CD8-positive, alpha-beta T cell (primary cell): ENCODE measurements at regions of chr17 and their contacts with region 1.

Region 1: DNA sequence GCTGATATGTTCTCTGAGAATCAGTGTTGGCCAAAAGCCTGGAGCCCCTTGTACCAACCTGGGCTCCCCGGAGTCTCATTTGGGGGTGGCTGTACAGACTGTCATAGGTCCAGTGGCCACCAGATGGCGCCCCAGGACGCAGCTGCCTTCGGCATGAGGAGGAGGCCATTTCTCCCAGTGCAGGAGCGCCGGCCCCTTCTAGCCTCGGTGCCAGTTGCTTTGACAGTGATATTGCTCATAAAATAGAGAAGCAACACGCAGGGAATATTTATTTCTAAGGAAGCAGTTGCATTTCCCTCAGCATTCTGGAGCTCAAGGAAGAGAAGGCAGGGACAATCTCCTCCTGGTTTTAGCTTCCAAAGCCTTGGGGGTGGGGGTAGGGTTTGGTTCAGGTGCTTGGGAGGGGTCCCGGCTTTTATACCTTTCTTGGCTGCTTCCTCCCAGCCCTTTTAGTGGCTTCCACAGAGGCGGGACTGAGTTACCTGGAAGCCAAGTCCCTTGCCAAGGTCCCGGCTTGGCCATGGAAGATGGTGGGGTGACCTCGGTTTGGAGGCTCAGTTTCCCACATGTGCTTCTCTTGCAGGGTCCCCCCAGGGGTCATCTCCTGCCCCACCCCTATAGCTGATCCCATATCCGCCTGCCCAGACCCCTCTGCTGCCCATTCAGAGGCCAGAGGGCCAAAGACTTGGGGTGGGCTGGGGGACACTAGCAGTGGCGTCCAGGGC is 117.8 kb upstream of the CDC42EP4 start:
- DNase-seq: peak; percentile 76 to 95 (median 85)
- ATAC-seq: peak; percentile 92
- H3K4me3 ChIP-seq: no peak overlapping the region
- H3K4me3 Mint-ChIP-seq: no peak overlapping the region
- H3K27ac ChIP-seq: no peak overlapping the region
- H3K27ac Mint-ChIP-seq: no peak overlapping the region
- H3K4me1 ChIP-seq: peaks cover 3% of the 10 kb centered on the region
- H3K4me1 Mint-ChIP-seq: peaks cover 7% of the 10 kb centered on the region
- H3K27me3 ChIP-seq: no peaks in the 10 kb centered on the region
- H3K27me3 Mint-ChIP-seq: no peaks in the 10 kb centered on the region
- CTCF ChIP-seq: peak; percentile 96

Region 2: DNA sequence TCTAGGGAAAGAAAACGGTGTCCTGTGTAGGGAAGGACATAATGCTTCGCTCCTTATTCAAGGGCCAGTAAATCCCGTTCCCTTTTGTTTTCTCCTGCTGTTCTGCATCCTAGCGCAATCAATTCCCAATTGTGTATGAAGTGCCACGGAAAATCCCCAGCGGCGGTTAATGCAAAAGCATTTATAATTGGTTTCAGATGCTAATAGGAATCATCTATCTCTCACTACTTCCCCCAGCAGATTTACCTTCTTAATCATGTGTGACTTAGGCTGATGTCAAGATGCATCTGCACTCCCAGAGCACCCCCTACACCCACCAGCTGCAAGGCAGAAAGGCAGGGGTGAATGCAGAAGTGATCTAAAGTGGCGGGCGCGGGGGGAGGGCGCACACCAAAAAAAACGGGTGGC is 297.5 kb before region 1 on chr17:
- CTCF ChIA-PET with region 1: no interaction called
- POLR2A ChIA-PET with region 1: no interaction called
- intact Hi-C with region 1: no loop called
- DNase-seq: no peak
- ATAC-seq: no peak
- H3K4me3 ChIP-seq: no peak overlapping the region
- H3K4me3 Mint-ChIP-seq: no peak overlapping the region
- H3K27ac ChIP-seq: no peak overlapping the region
- H3K27ac Mint-ChIP-seq: no peak overlapping the region
- H3K4me1 ChIP-seq: no peaks in the 10 kb centered on the region
- H3K4me1 Mint-ChIP-seq: no peaks in the 10 kb centered on the region
- H3K27me3 ChIP-seq: no peaks in the 10 kb centered on the region
- H3K27me3 Mint-ChIP-seq: no peaks in the 10 kb centered on the region
- CTCF ChIP-seq: no peak

Region 3: DNA sequence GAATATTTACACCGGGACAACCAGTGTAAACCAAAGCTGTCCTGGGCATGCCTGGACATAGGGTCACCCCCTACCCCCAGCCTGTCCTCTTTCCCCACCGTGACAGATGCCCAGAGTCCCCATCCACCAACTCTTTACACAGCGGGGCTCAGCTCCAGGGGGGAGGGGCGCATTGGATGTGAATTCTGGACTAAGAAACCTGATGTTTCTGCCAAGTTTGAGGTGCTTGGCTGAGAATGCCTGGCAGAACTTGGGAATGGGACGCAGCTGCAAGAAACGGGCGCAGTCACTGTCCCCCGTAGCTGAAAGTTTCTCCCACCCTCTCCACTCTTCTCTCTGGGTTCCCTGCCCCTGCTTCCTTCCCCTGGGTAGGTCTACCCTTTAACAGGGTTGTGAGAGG is 49.8 kb before region 1 on chr17:
- CTCF ChIA-PET with region 1: no interaction called
- POLR2A ChIA-PET with region 1: no interaction called
- intact Hi-C with region 1: no loop called
- DNase-seq: no peak
- ATAC-seq: no peak
- H3K4me3 ChIP-seq: no peak overlapping the region
- H3K4me3 Mint-ChIP-seq: no peak overlapping the region
- H3K27ac ChIP-seq: no peak overlapping the region
- H3K27ac Mint-ChIP-seq: no peak overlapping the region
- H3K4me1 ChIP-seq: no peaks in the 10 kb centered on the region
- H3K4me1 Mint-ChIP-seq: no peaks in the 10 kb centered on the region
- H3K27me3 ChIP-seq: no peaks in the 10 kb centered on the region
- H3K27me3 Mint-ChIP-seq: no peaks in the 10 kb centered on the region
- CTCF ChIP-seq: no peak

Region 4: DNA sequence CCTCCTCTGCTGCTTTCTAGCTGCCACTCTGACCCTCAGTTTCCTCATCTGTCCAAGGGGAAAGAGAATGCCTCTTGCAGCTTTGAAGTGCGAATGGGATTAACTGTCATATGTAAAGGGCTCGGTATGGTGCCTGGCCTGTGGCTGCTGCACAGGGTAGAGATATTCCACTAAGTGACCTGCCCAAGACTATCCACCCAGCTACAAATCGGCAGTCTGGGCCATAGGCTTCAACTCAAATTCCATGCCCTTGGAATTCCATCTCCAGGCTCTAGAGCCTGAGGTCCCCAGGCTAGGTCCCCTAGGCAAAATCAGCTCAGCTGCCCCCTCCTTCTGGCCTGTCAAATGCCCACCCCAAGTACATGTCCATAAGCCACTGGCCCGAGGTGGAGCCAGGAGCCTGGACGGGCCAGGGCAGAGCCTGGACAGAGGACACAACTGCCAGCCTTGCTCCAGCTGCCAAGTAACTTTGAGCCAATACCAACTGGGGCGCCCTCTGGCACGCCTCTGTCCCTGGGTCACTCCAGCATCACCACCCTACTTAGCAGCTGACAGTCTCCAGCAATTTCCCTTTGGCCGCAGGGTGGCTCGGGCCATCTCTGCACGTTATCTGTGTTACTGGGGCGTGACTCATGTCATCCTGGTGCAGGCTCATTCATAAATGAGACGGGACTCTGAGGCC is 157.5 kb after region 1 on chr17:
- CTCF ChIA-PET with region 1: interaction called, 10 read pairs
- POLR2A ChIA-PET with region 1: no interaction called
- intact Hi-C with region 1: loop called in 1 of 2 experiments (anchors 2 kb)
- DNase-seq: no peak
- ATAC-seq: no peak
- H3K4me3 ChIP-seq: no peak overlapping the region
- H3K4me3 Mint-ChIP-seq: no peak overlapping the region
- H3K27ac ChIP-seq: no peak overlapping the region
- H3K27ac Mint-ChIP-seq: no peak overlapping the region
- H3K4me1 ChIP-seq: peaks cover 44% of the 10 kb centered on the region
- H3K4me1 Mint-ChIP-seq: peaks cover 60% of the 10 kb centered on the region
- H3K27me3 ChIP-seq: no peaks in the 10 kb centered on the region
- H3K27me3 Mint-ChIP-seq: no peaks in the 10 kb centered on the region
- CTCF ChIP-seq: no peak

Region 5: DNA sequence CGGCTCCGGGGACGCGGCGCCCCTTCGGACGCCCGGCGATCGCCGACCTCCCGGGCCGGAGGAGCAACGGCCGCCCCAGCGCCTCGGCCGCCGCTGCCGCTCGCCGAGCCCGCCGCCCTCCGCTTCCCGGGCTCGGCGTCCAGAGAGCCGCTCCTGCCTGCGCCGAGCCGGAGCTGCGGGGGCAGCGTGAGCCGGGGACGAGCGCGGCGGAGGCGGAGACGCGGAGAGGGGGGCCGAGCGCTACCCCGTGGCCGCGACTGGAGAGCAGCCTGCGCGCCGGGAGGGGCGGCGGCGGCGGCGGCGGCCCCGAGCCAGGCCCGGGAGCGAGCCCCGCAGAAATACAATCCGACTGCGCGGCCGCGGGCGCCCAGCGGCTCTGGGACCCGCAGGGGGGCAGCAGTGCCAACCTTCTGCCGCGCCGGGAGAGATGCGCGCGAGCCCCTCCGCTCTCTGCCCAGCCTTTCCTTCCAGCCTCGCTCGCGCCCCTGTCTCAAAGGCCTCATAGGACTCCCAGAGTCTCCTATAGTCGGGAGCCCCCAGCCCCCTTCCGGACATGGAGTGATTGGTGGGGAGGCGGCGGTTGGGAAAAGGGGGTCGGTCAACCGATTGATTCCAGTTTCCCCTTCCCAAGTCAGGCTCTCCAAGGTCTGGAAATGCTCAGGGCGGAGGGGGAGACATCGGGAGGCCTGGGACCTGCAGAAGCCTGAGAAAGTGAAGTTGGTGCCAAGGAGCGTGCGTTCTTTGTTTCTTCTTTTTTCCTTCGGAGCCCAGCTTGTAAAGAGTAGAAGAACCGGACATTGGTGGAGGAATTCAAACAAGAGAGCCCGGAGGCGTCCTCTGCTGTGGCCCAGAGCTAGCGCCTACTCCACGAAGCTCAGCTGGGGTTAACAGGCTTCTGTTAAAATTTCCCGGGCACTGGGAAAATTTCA is 215.7 kb after region 1 on chr17:
- CTCF ChIA-PET with region 1: interaction called, 43 read pairs
- POLR2A ChIA-PET with region 1: interaction called, 5 read pairs
- intact Hi-C with region 1: loop called in 1 of 2 experiments (anchors 2 kb)
- DNase-seq: peak in 7 of 9 experiments; percentile 14 to 78 (median 54)
- ATAC-seq: peak; percentile 55
- H3K4me3 ChIP-seq: peak overlapping the region in 1 of 2 experiments; percentile 27
- H3K4me3 Mint-ChIP-seq: peak overlapping the region; percentile 65
- H3K27ac ChIP-seq: no peak overlapping the region
- H3K27ac Mint-ChIP-seq: no peak overlapping the region
- H3K4me1 ChIP-seq: peaks cover 19% of the 10 kb centered on the region
- H3K4me1 Mint-ChIP-seq: peaks cover 30% of the 10 kb centered on the region
- H3K27me3 ChIP-seq: peaks cover 0 to 13% of the 10 kb centered on the region in 2 experiments
- H3K27me3 Mint-ChIP-seq: no peaks in the 10 kb centered on the region
- CTCF ChIP-seq: peak; percentile 26

Region 6: GRCh38 chr17:73719588-73720071 is 290.0 kb after region 1 on chr17:
- CTCF ChIA-PET with region 1: interaction called, 144 read pairs
- POLR2A ChIA-PET with region 1: interaction called, 3 read pairs
- intact Hi-C with region 1: no loop called
- DNase-seq: no peak
- ATAC-seq: no peak
- H3K4me3 ChIP-seq: no peak overlapping the region
- H3K4me3 Mint-ChIP-seq: peak overlapping the region; percentile 35
- H3K27ac ChIP-seq: no peak overlapping the region
- H3K27ac Mint-ChIP-seq: peak overlapping the region; percentile 89
- H3K4me1 ChIP-seq: peaks cover 48% of the 10 kb centered on the region
- H3K4me1 Mint-ChIP-seq: peaks cover 48% of the 10 kb centered on the region
- H3K27me3 ChIP-seq: no peaks in the 10 kb centered on the region
- H3K27me3 Mint-ChIP-seq: no peaks in the 10 kb centered on the region
- CTCF ChIP-seq: no peak

Region 7: GRCh38 chr17:73841431-73842060 is 411.9 kb after region 1 on chr17:
- CTCF ChIA-PET with region 1: interaction called, 4 read pairs
- POLR2A ChIA-PET with region 1: interaction called, 3 read pairs
- intact Hi-C with region 1: loop called in 1 of 2 experiments (anchors 1 kb)
- DNase-seq: peak in 2 of 9 experiments; percentile 30 to 56
- ATAC-seq: peak; percentile 51
- H3K4me3 ChIP-seq: no peak overlapping the region
- H3K4me3 Mint-ChIP-seq: no peak overlapping the region
- H3K27ac ChIP-seq: no peak overlapping the region
- H3K27ac Mint-ChIP-seq: no peak overlapping the region
- H3K4me1 ChIP-seq: no peaks in the 10 kb centered on the region
- H3K4me1 Mint-ChIP-seq: peaks cover 3% of the 10 kb centered on the region
- H3K27me3 ChIP-seq: no peaks in the 10 kb centered on the region
- H3K27me3 Mint-ChIP-seq: no peaks in the 10 kb centered on the region
- CTCF ChIP-seq: peak; percentile 18

Region 8: DNA sequence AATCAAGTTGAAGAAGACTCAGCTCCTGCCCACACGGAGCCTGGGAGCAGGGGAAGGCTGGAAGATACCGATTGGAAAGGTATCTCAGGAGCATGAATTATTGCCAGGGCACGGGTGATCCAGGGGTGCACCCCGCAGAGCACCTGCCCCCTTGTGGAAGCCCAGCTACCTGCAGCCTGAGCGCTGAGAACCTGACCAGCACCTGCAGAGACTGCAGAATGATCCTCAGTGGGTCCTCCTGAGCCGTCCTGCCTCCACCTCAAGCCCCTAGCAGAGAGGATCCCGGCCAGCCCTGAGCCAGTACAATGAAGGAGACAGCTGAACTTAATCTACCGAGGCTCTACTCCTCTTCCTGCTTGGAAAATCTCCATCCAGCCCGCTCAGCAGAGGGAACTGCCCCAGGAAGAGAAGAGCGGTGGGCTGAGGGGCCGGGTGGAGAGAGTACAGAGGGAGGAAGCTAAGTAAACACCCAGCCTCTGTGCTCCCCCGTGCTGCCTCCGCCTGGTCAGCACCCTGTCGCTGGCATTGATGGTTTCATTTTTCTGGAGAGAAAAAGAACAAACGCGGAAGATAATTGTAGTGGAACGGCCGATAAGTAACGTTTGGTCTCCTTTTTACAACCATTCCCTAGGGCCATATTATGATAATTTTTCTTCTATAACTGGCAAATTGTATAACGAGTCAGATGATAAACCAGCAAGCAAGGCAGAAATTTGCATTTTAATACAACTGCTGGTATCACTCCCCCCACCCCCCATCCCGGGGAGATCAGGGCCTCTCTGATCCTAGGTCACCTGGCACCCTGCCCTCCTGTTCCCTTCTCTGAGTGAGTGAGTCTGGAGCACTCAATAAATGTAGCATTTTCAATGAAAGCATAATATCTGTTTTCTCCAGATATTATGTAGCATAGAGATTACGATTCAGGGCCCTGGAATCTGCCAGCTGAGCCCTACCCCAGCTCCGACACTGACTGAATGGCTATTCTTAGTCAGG is 569.3 kb after region 1 on chr17:
- CTCF ChIA-PET with region 1: interaction called, 16 read pairs
- POLR2A ChIA-PET with region 1: no interaction called
- intact Hi-C with region 1: loop called in 1 of 2 experiments (anchors 1 kb)
- DNase-seq: peak; percentile 25 to 79 (median 59)
- ATAC-seq: peak; percentile 52
- H3K4me3 ChIP-seq: no peak overlapping the region
- H3K4me3 Mint-ChIP-seq: no peak overlapping the region
- H3K27ac ChIP-seq: no peak overlapping the region
- H3K27ac Mint-ChIP-seq: no peak overlapping the region
- H3K4me1 ChIP-seq: no peaks in the 10 kb centered on the region
- H3K4me1 Mint-ChIP-seq: no peaks in the 10 kb centered on the region
- H3K27me3 ChIP-seq: peaks cover 0 to 3% of the 10 kb centered on the region in 2 experiments
- H3K27me3 Mint-ChIP-seq: peaks cover 11% of the 10 kb centered on the region
- CTCF ChIP-seq: peak; percentile 73